Mammary epithelial cell (primary cell): ENCODE measurements at regions of chr16 and their contacts with region 1.

Region 1: DNA sequence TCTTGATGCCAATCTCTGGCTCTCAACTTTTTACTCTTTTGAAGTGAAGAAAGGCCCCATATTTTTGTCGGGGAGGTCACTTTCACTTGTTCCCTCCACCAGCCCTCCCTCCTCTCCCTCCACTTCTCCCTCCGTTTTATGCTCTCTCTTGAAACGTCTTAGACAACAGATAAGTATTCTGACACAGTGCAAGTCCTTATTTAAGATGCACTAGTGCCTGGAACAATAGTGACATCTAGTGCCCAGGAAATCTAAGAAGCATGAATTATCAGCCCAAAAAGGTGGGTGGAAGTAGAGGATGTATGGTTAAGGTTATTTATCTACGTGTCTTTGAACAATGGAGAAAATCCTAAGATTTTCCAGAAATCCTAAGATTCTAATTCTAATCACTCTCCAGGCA is 17.9 kb downstream of the PSME3IP1 start:
- DNase-seq: peak; percentile 34
- H3K4me3 ChIP-seq: no peak overlapping the region
- H3K27ac ChIP-seq: no peak overlapping the region
- H3K4me1 ChIP-seq: no peaks in the 10 kb centered on the region
- H3K27me3 ChIP-seq: no peaks in the 10 kb centered on the region
- CTCF ChIP-seq: peak; percentile 34 to 58

Region 2: GRCh38 chr16:56691885-56692284 is 476.1 kb before region 1 on chr16:
- CTCF ChIA-PET with region 1: no interaction called
- dilution Hi-C with region 1: no loop called
- in situ Hi-C with region 1: no loop called
- intact Hi-C with region 1: no loop called
- DNase-seq: peak; percentile 98
- H3K4me3 ChIP-seq: no peak overlapping the region
- H3K27ac ChIP-seq: peak overlapping the region; percentile 18
- H3K4me1 ChIP-seq: peaks cover 24% of the 10 kb centered on the region
- H3K27me3 ChIP-seq: no peaks in the 10 kb centered on the region
- CTCF ChIP-seq: no peak

Region 3: GRCh38 chr16:56866943-56867830 is 300.8 kb before region 1 on chr16:
- CTCF ChIA-PET with region 1: no interaction called
- dilution Hi-C with region 1: no loop called
- in situ Hi-C with region 1: no loop called
- intact Hi-C with region 1: loop called (anchors 1 kb)
- DNase-seq: peak; percentile 19
- H3K4me3 ChIP-seq: no peak overlapping the region
- H3K27ac ChIP-seq: no peak overlapping the region
- H3K4me1 ChIP-seq: no peaks in the 10 kb centered on the region
- H3K27me3 ChIP-seq: no peaks in the 10 kb centered on the region
- CTCF ChIP-seq: peak; percentile 63 to 72

Region 4: GRCh38 chr16:56964243-56965148 is 203.5 kb before region 1 on chr16:
- CTCF ChIA-PET with region 1: no interaction called
- dilution Hi-C with region 1: no loop called
- in situ Hi-C with region 1: no loop called
- intact Hi-C with region 1: loop called (anchors 1 kb)
- DNase-seq: peak; percentile 60
- H3K4me3 ChIP-seq: no peak overlapping the region
- H3K27ac ChIP-seq: no peak overlapping the region
- H3K4me1 ChIP-seq: peaks cover 3% of the 10 kb centered on the region
- H3K27me3 ChIP-seq: no peaks in the 10 kb centered on the region
- CTCF ChIP-seq: peak; percentile 76 to 77

Region 5: DNA sequence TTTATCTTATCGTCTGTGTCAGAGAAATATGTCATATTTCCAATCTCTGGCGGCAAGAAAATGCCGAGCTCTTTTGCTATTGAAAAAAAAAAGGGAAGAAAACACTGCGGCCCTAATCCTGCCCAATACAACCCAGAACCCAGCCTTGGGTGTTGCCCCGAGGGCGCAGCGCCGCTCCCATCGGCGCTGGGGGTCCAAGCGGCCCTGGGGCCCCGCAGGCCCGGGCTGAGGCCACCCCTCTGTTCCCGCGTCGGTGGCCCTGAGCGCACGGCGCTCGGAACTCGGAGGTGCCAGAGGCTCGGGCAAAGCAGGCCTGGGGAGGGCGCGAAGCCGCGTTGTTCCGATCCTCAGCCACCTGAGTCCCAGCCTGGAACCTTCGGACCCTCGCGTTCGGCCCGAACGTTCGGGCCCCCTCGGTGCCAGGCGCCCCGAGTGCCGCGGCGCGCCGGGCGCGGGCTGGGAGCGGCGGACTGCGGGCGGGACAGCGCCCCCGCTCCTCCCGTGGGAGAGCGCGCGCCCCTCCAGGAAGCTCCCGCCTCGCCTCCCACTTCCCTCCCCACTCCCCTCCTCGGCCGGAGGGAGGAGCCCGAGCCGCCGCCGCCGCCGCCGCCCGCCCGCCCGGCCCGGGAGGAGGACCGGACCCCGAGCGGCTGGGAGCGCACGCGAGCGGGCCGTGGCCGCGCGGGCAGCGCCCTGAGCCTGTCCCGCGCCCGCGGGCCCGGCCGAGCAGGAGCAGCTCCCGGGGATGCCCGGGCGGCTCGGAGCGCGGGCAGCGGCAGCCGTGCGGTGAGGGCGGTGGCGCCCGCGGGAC is 75.8 kb before region 1 on chr16 and contains the start of gene CPNE2:
- CTCF ChIA-PET with region 1: no interaction called
- dilution Hi-C with region 1: no loop called
- in situ Hi-C with region 1: loop called in 1 of 2 experiments (anchors 10 kb)
- intact Hi-C with region 1: loop called (anchors 2 kb)
- DNase-seq: no peak
- H3K4me3 ChIP-seq: peak within 1 kb of the TSS; percentile 61 to 74 (median 68)
- H3K27ac ChIP-seq: peak within 1 kb of the TSS; percentile 16
- H3K4me1 ChIP-seq: peaks cover 19% of the 10 kb centered on the region
- H3K27me3 ChIP-seq: no peaks in the 10 kb centered on the region
- CTCF ChIP-seq: no peak
- total RNA-seq, gene CPNE2: 7.3 to 24.0 TPM

Region 6: DNA sequence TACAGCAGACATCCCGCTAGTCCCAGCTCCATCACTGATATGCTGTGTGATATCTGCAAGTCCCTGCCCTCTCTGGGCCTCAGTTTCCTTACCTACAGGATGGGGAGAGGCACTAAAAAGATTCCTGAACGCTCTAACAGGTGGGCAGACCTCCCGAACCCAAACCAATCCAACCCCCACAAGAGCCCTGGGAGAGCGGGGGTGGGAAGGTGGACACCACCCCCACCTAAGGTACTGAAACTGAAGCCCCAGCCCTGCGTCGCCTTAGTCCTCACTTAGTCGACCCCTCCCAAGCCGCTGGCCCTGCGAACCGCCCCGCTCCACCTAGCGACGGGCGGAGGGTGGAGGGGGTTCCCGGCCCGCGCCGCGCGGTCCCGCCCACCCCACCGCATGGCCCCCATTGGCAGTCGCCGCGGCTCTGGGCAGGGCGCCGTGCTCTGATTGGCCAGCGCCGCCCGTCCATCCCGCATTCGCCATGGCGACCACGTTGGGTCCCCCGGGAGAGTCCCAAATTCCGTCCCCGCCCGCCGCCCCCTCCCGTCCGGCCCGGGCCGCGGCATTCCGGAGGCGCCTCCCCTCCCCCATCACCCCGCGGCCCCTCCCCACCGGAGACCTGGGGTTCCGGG is 367.8 kb after region 1 on chr16:
- CTCF ChIA-PET with region 1: no interaction called
- dilution Hi-C with region 1: no loop called
- in situ Hi-C with region 1: no loop called
- intact Hi-C with region 1: no loop called
- DNase-seq: peak; percentile 89
- H3K4me3 ChIP-seq: peak overlapping the region; percentile 68 to 84 (median 77)
- H3K27ac ChIP-seq: peak overlapping the region; percentile 58
- H3K4me1 ChIP-seq: peaks cover 11% of the 10 kb centered on the region
- H3K27me3 ChIP-seq: no peaks in the 10 kb centered on the region
- CTCF ChIP-seq: peak in 1 of 2 donors; percentile 32